ENCODE measurements at regions of chr6 and their contacts with region 1.

Region 1: GRCh38 chr6:24283043-24283985 is 74.5 kb downstream of the DCDC2 start:
- DNase-seq: peak; percentile 90
- ATAC-seq: peak; percentile 99
- H3K4me3 ChIP-seq: peak overlapping the region in 2 of 3 experiments; percentile 12 to 19; a peak in 2 of 6 replicates
- H3K27ac ChIP-seq: peak overlapping the region; percentile 43
- H3K4me1 ChIP-seq: peaks cover 38% of the 10 kb centered on the region
- H3K27me3 ChIP-seq: no peaks in the 10 kb centered on the region
- CTCF ChIP-seq: peak; percentile 94
- EP300 ChIP-seq: 0 out of 4 replicates have a peak, but pooled peaks of 1 of the 2 experiments have one; percentile 26
- POLR2A ChIP-seq: no peak
- RAD21 ChIP-seq: peak; percentile 91

Region 2: GRCh38 chr6:24323632-24324337 is 40.5 kb after region 1 on chr6:
- CTCF ChIA-PET with region 1: no interaction called
- POLR2A ChIA-PET with region 1: interaction called, 5 read pairs
- in situ Hi-C with region 1: no loop called
- intact Hi-C with region 1: loop called (anchors 5 kb)
- DNase-seq: peak; percentile 94
- ATAC-seq: peak; percentile 97
- H3K4me3 ChIP-seq: peak overlapping the region in 2 of 3 experiments; percentile 5 to 32; a peak in 1 of 6 replicates
- H3K27ac ChIP-seq: peak overlapping the region; percentile 86
- H3K4me1 ChIP-seq: peaks cover 92% of the 10 kb centered on the region
- H3K27me3 ChIP-seq: no peaks in the 10 kb centered on the region
- CTCF ChIP-seq: no peak
- EP300 ChIP-seq: peak; percentile 51 to 77; a peak in 2 of 4 replicates
- POLR2A ChIP-seq: no peak
- RAD21 ChIP-seq: no peak

Region 3: GRCh38 chr6:24357336-24358218 is 74.3 kb after region 1 on chr6 and contains the start of gene DCDC2:
- CTCF ChIA-PET with region 1: interaction called, 15 read pairs
- POLR2A ChIA-PET with region 1: interaction called, 4 read pairs
- in situ Hi-C with region 1: no loop called
- intact Hi-C with region 1: loop called (anchors 1 kb)
- DNase-seq: peak; percentile 87
- ATAC-seq: peak; percentile 91
- H3K4me3 ChIP-seq: peak within 1 kb of the TSS; percentile 69 to 81 (median 81)
- H3K27ac ChIP-seq: peak within 1 kb of the TSS; percentile 69
- H3K4me1 ChIP-seq: peaks cover 40% of the 10 kb centered on the region
- H3K27me3 ChIP-seq: no peaks in the 10 kb centered on the region; a peak in 1 of 5 replicates
- CTCF ChIP-seq: peak; percentile 35
- EP300 ChIP-seq: 0 out of 4 replicates have a peak, but pooled peaks of 1 of the 2 experiments have one; percentile 19
- POLR2A ChIP-seq: peak; percentile 66 to 70
- RAD21 ChIP-seq: peak; percentile 58; the same call in 1 of the 2 replicates
- total RNA-seq, gene DCDC2: 36.2 and 40.4 TPM in 2 replicates

Region 4: GRCh38 chr6:24402697-24403501 is 119.6 kb after region 1 on chr6 and contains the start of gene MRS2:
- CTCF ChIA-PET with region 1: interaction called, 6 read pairs
- POLR2A ChIA-PET with region 1: no interaction called
- in situ Hi-C with region 1: no loop called
- intact Hi-C with region 1: loop called (anchors 1 kb)
- DNase-seq: peak; percentile 85
- ATAC-seq: peak; percentile 96
- H3K4me3 ChIP-seq: peak within 1 kb of the TSS; percentile 78 to 95 (median 83)
- H3K27ac ChIP-seq: peak within 1 kb of the TSS; percentile 79
- H3K4me1 ChIP-seq: peaks cover 71% of the 10 kb centered on the region
- H3K27me3 ChIP-seq: no peaks in the 10 kb centered on the region; a peak in 1 of 5 replicates
- CTCF ChIP-seq: peak; percentile 27; the same call in 1 of the 2 replicates
- EP300 ChIP-seq: no peak
- POLR2A ChIP-seq: peak; percentile 97 to 100
- RAD21 ChIP-seq: peak; percentile 68
- total RNA-seq, gene MRS2: 83.8 and 90.2 TPM in 2 replicates

Region 5: GRCh38 chr6:24494821-24495795 is 211.8 kb after region 1 on chr6 and contains the start of gene ALDH5A1:
- CTCF ChIA-PET with region 1: no interaction called
- POLR2A ChIA-PET with region 1: no interaction called
- in situ Hi-C with region 1: no loop called
- intact Hi-C with region 1: loop called (anchors 10 kb)
- DNase-seq: peak; percentile 84
- ATAC-seq: peak; percentile 86
- H3K4me3 ChIP-seq: peak within 1 kb of the TSS; percentile 78 to 92 (median 82)
- H3K27ac ChIP-seq: peak within 1 kb of the TSS; percentile 86
- H3K4me1 ChIP-seq: peaks cover 36% of the 10 kb centered on the region
- H3K27me3 ChIP-seq: no peaks in the 10 kb centered on the region
- CTCF ChIP-seq: peak; percentile 83
- EP300 ChIP-seq: no peak
- POLR2A ChIP-seq: peak; percentile 80 to 87
- RAD21 ChIP-seq: peak; percentile 79
- total RNA-seq, gene ALDH5A1: 27.6 and 32.5 TPM in 2 replicates

Region 6: GRCh38 chr6:25070547-25071366 is 787.4 kb after region 1 on chr6:
- CTCF ChIA-PET with region 1: no interaction called
- POLR2A ChIA-PET with region 1: no interaction called
- in situ Hi-C with region 1: no loop called
- intact Hi-C with region 1: loop called (anchors 5 kb)
- DNase-seq: peak; percentile 68
- ATAC-seq: peak; percentile 94
- H3K4me3 ChIP-seq: no peak overlapping the region
- H3K27ac ChIP-seq: no peak overlapping the region
- H3K4me1 ChIP-seq: no peaks in the 10 kb centered on the region
- H3K27me3 ChIP-seq: 0 out of 5 replicates have a peak, but pooled peaks cover 0 to 3% of the 10 kb centered on the region in 2 experiments
- CTCF ChIP-seq: peak; percentile 90
- EP300 ChIP-seq: no peak
- POLR2A ChIP-seq: no peak
- RAD21 ChIP-seq: peak; percentile 87

Measured in HepG2 (cell line).